Thyroid gland (tissue), 4 donors: ENCODE measurements at regions of chr1 and their contacts with region 1.

Region 1: DNA sequence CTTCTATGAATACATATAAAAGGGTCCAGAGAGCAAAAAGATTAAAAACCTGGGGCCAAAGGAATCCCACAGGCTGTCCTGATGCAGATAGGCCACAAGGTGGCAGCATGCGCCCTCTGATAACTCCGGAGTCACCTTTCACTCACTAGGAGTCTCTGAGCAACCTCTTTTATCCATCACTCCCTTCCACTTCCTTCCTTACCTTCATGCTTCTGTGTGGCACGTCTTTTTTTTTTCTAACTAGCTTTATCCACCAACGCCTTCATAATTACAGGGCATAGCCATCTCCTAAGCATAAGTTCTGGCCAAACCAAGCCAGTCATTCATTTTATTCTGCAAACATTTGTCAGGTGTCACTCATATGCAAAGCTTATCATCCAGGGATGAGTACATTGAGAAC is 3.9 kb upstream of the PGLYRP4 start:
- DNase-seq: peak; percentile 53 to 64
- H3K4me3 ChIP-seq: no peak overlapping the region
- H3K27ac ChIP-seq: no peak overlapping the region
- H3K4me1 ChIP-seq: no peaks in the 10 kb centered on the region
- H3K27me3 ChIP-seq: no peaks in the 10 kb centered on the region
- CTCF ChIP-seq: peak; percentile 62 to 93 (median 74)
- POLR2A ChIP-seq: no peak

Region 2: DNA sequence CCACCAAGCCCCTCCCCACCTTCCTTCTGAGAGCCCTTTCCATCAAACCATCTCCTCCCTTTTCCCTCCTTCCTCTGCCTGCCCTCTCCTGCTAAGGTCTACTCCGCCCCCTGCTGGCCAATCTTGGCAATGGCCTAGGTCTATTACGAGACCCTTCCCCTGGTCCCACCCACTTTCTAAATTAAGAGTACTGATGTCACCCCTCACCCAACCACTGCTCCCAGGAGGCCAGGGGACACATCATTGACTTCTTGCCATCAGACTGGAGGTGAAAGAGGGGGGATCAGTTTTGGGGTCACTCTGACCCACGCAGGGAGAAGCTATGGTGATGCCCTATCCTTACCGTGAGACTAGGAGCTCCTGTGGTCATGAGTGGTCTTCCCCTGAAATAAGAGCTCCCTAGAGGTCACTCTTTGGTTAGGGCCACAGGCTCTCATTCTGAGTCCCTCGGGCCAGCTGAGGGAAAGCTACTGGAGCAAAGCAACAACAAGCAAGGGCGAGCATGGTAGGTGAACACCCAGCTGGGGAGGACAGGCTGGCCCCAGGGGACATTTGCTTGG is 142.5 kb after region 1 on chr1:
- intact Hi-C with region 1: loop called (anchors 5 kb)
- DNase-seq: peak; percentile 52 to 67
- H3K4me3 ChIP-seq: no peak overlapping the region
- H3K27ac ChIP-seq: no peak overlapping the region
- H3K4me1 ChIP-seq: no peaks in the 10 kb centered on the region
- H3K27me3 ChIP-seq: no peaks in the 10 kb centered on the region
- CTCF ChIP-seq: peak; percentile 71 to 88 (median 81)
- POLR2A ChIP-seq: no peak

Region 3: DNA sequence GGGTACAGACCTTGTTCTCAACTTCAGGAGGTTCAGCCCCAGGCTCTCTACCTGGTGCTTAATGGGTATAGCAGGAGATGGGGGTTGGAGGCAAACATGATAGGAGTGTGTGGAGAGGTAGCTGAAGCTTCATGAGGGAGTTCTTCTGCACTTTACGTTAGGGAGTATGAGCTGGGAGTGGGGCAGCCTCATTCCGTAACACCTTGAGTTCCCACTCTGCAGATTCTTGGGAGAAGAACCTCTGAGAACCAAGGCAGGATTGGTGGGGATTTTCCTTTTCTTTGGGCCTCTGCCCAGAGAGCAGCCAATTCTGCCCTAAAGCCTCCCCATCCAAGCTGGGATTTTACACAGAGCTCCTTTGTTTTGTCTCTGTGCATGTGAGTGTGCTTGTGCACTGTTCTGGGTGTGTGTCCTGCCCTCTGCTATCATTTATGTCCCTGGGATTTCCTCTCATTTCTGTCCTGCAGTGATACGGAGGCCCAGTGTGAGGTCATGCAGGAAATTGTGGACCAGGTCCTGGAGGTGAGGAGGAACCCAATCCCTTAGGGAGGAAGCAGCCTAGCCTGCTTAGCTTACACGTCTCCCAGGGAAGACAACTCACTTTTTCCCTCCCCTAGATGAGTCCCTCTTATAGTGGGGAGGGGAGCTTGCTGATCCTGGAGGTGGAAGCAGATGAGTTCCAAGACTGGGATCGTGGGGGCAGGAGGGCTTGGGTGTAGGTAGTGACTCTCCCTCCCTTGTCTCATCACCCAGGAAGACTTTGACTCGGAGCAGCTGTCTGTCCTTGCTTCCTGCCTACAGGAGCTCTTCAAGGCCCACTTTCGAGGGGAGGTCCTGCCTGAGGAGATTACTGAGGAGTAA is 411.1 kb after region 1 on chr1:
- intact Hi-C with region 1: no loop called
- DNase-seq: no peak
- H3K4me3 ChIP-seq: no peak overlapping the region
- H3K27ac ChIP-seq: peak overlapping the region in 2 of 3 donors; percentile 3 to 34
- H3K4me1 ChIP-seq: no peaks in the 10 kb centered on the region
- H3K27me3 ChIP-seq: no peaks in the 10 kb centered on the region
- CTCF ChIP-seq: no peak
- POLR2A ChIP-seq: no peak

Region 4: GRCh38 chr1:153869473-153869872 is 517.0 kb after region 1 on chr1:
- intact Hi-C with region 1: no loop called
- DNase-seq: no peak
- H3K4me3 ChIP-seq: no peak overlapping the region
- H3K27ac ChIP-seq: no peak overlapping the region
- H3K4me1 ChIP-seq: peaks cover 15 to 23% of the 10 kb centered on the region in 2 donors
- H3K27me3 ChIP-seq: no peaks in the 10 kb centered on the region
- CTCF ChIP-seq: no peak
- POLR2A ChIP-seq: no peak